Activated CD8-positive, alpha-beta memory T cell treated with anti-CD3 and anti-CD28 coated beads, Interleukin-2, amount 10 ng/mL, durations not matched to agents 7 days and 5 days (primary cell): ENCODE measurements at regions of chr12 and their contacts with region 1.

Region 1: GRCh38 chr12:121811434-121812319 is 7.9 kb downstream of the SETD1B start:
- DNase-seq: peak; percentile 72
- ATAC-seq: peak; percentile 89
- H3K4me3 Mint-ChIP-seq: peak overlapping the region; percentile 78
- H3K27ac Mint-ChIP-seq: peak overlapping the region; percentile 58
- H3K4me1 Mint-ChIP-seq: peaks cover 46% of the 10 kb centered on the region
- H3K27me3 Mint-ChIP-seq: no peaks in the 10 kb centered on the region

Region 2: DNA sequence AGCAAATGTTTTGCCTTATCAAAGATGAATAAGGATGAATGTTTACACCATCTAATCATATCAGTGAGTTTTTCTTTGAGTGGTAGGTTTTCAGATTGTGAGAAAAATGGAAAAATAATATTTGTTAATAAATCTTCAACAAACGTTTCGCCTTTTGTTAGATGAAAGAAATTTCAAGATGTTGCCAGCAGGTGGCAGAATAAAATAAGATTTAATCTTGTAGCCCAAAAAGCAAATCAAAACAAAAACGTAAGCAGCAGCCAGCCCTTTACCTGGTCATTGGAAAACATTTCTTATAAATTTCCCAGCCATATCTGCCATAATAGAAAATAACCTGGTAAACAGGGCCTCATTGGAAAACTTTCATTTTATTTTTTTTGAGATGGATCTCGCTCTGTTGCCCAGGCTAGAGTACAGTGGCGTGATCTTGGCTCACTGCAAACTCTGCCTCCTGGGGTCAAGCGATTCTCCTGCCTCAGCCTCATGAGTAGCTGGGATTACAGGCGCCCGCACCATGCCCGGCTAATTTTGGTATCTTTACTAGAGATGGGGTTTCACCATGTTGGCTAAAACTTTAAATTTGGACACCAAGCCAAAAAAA is 114.5 kb before region 1 on chr12:
- CTCF ChIA-PET with region 1: interaction called, 11 read pairs
- DNase-seq: no peak
- ATAC-seq: no peak
- H3K4me3 Mint-ChIP-seq: no peak overlapping the region
- H3K27ac Mint-ChIP-seq: no peak overlapping the region
- H3K4me1 Mint-ChIP-seq: peaks cover 4% of the 10 kb centered on the region
- H3K27me3 Mint-ChIP-seq: peaks cover 2% of the 10 kb centered on the region

Region 3: GRCh38 chr12:121712461-121713256 is 99.0 kb before region 1 on chr12 and contains the start of gene TMEM120B:
- CTCF ChIA-PET with region 1: interaction called, 20 read pairs
- DNase-seq: peak; percentile 85
- ATAC-seq: peak; percentile 89
- H3K4me3 Mint-ChIP-seq: peak within 1 kb of the TSS; percentile 99
- H3K27ac Mint-ChIP-seq: peak within 1 kb of the TSS; percentile 96
- H3K4me1 Mint-ChIP-seq: peaks cover 26% of the 10 kb centered on the region
- H3K27me3 Mint-ChIP-seq: no peaks in the 10 kb centered on the region
- total RNA-seq, gene TMEM120B: 8.8 to 11.0 TPM

Region 4: DNA sequence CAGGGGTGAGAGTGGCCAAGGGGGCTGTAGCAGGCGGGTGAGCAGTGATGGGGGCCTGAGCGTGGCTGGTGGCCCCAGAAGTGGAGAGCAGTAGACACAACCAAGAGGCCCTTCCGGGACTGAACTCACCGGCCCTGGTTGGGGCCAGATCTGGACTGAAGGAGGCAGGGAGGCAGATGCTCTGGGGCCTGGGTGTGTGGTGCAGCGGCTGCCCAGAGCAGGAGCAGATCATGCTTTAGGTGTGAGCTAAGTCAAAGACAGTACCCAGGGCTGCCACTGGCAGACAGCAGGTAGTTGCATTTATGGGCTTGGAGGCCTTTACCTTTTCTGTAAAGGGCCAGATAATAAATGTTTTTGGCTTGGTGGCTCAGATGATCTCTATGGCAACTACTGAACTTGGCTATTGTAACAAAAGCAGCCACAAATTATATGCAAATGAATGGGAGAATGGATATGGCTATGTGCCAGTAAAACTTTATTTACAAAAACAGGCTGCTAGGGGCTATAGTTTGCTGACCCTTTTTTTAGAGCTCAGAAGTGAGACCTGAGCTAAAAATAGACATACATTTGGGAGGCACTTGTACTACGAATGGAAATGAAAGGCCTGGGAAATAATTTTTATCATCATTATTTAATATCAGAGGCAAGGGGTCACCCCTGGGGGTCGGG is 17.7 kb after region 1 on chr12:
- CTCF ChIA-PET with region 1: interaction called, 16 read pairs
- DNase-seq: no peak
- ATAC-seq: no peak
- H3K4me3 Mint-ChIP-seq: no peak overlapping the region
- H3K27ac Mint-ChIP-seq: no peak overlapping the region
- H3K4me1 Mint-ChIP-seq: no peaks in the 10 kb centered on the region
- H3K27me3 Mint-ChIP-seq: no peaks in the 10 kb centered on the region

Region 5: GRCh38 chr12:121839106-121839992 is 27.7 kb after region 1 on chr12:
- CTCF ChIA-PET with region 1: interaction called, 31 read pairs
- DNase-seq: peak; percentile 99
- ATAC-seq: peak; percentile 93
- H3K4me3 Mint-ChIP-seq: peak overlapping the region; percentile 98
- H3K27ac Mint-ChIP-seq: peak overlapping the region; percentile 87
- H3K4me1 Mint-ChIP-seq: peaks cover 19% of the 10 kb centered on the region
- H3K27me3 Mint-ChIP-seq: peaks cover 3% of the 10 kb centered on the region

Region 6: DNA sequence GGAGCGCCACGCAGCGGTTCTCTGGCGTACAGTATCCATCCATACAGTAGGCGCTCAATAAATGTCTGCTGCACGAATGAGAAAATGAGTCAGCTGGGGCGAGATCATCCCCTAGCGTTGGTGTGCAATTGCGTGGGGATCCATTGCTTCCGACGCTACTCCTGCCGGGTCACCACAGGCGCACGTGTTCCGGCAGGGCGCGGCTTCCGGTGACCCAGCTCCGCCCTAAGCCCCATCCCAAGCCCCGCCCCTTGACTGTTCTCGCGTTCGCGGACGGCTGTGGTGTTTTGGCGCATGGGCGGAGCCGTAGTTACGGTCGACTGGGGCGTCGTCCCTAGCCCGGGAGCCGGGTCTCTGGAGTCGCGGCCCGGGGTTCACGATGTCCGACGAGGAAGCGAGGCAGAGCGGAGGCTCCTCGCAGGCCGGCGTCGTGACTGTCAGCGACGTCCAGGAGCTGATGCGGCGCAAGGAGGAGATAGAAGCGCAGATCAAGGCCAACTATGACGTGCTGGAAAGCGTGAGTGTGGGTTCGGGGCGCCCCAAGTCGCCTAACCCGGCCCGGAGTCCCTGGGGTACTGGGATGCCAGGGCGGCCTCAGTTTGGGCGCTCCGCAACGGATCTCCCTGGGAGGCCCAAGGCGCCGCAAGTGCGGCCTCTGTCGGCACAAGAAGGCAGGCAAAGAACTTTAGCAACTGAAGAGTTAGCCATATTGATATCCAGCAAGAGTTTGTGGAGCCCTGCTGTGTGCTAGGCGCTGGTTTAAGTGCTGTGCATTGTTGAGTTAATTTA is 77.0 kb after region 1 on chr12 and contains the start of gene PSMD9:
- CTCF ChIA-PET with region 1: interaction called, 15 read pairs
- DNase-seq: peak; percentile 99
- ATAC-seq: peak; percentile 94
- H3K4me3 Mint-ChIP-seq: peak within 1 kb of the TSS; percentile 98
- H3K27ac Mint-ChIP-seq: peak within 1 kb of the TSS; percentile 98
- H3K4me1 Mint-ChIP-seq: peaks cover 40% of the 10 kb centered on the region
- H3K27me3 Mint-ChIP-seq: peaks cover 2% of the 10 kb centered on the region
- total RNA-seq, gene PSMD9: 61.9 to 63.5 TPM